ENCODE measurements at regions of chr3 and their contacts with region 1.

Region 1: GRCh38 chr3:105729667-105730066 is 139.1 kb downstream of the CBLB start:
- DNase-seq: no peak
- ATAC-seq: no peak
- H3K4me3 ChIP-seq: no peak overlapping the region
- H3K4me3 Mint-ChIP-seq: no peak overlapping the region
- H3K27ac ChIP-seq: no peak overlapping the region
- H3K27ac Mint-ChIP-seq: no peak overlapping the region
- H3K4me1 ChIP-seq: peaks cover 0 to 5% of the 10 kb centered on the region in 2 donors
- H3K4me1 Mint-ChIP-seq: peaks cover 17% of the 10 kb centered on the region
- H3K27me3 ChIP-seq: no peaks in the 10 kb centered on the region
- H3K27me3 Mint-ChIP-seq: no peaks in the 10 kb centered on the region
- CTCF ChIP-seq: no peak

Region 2: GRCh38 chr3:105715372-105715771 is 14.3 kb before region 1 on chr3:
- CTCF ChIA-PET with region 1: no interaction called
- POLR2A ChIA-PET with region 1: no interaction called
- intact Hi-C with region 1: no loop called
- DNase-seq: no peak
- ATAC-seq: no peak
- H3K4me3 ChIP-seq: no peak overlapping the region
- H3K4me3 Mint-ChIP-seq: no peak overlapping the region
- H3K27ac ChIP-seq: no peak overlapping the region
- H3K27ac Mint-ChIP-seq: no peak overlapping the region
- H3K4me1 ChIP-seq: no peaks in the 10 kb centered on the region
- H3K4me1 Mint-ChIP-seq: no peaks in the 10 kb centered on the region
- H3K27me3 ChIP-seq: no peaks in the 10 kb centered on the region
- H3K27me3 Mint-ChIP-seq: no peaks in the 10 kb centered on the region
- CTCF ChIP-seq: no peak

Region 3: DNA sequence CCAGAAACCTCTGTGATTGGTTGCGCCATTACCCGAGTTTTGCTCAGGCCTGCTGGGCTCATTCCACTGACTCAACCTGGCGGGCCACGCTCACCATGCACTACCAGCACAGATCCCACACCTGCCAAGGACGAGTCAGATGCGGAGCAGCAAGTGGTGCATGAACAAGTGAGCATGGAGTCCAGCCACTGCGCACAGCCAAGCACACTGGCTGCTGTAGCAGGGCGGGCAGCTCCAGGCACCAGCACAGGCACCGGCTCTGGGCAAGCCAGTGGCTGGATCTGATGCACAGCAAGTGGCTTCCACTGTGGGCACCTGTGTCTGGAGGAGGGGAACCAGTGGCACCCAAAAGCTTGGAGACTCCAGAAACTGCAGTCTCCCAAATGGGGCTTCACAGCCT is 28.8 kb after region 1 on chr3:
- CTCF ChIA-PET with region 1: no interaction called
- POLR2A ChIA-PET with region 1: no interaction called
- intact Hi-C with region 1: no loop called
- DNase-seq: no peak
- ATAC-seq: no peak
- H3K4me3 ChIP-seq: no peak overlapping the region
- H3K4me3 Mint-ChIP-seq: no peak overlapping the region
- H3K27ac ChIP-seq: no peak overlapping the region
- H3K27ac Mint-ChIP-seq: no peak overlapping the region
- H3K4me1 ChIP-seq: peaks cover 14 to 18% of the 10 kb centered on the region in 2 donors
- H3K4me1 Mint-ChIP-seq: peaks cover 20% of the 10 kb centered on the region
- H3K27me3 ChIP-seq: no peaks in the 10 kb centered on the region
- H3K27me3 Mint-ChIP-seq: no peaks in the 10 kb centered on the region
- CTCF ChIP-seq: no peak

Region 4: GRCh38 chr3:105774444-105775180 is 44.9 kb after region 1 on chr3:
- CTCF ChIA-PET with region 1: no interaction called
- POLR2A ChIA-PET with region 1: no interaction called
- intact Hi-C with region 1: loop called (anchors 5 kb)
- DNase-seq: no peak
- ATAC-seq: no peak
- H3K4me3 ChIP-seq: no peak overlapping the region
- H3K4me3 Mint-ChIP-seq: no peak overlapping the region
- H3K27ac ChIP-seq: peak overlapping the region in 1 of 2 donors; percentile 50
- H3K27ac Mint-ChIP-seq: no peak overlapping the region
- H3K4me1 ChIP-seq: peaks cover 8 to 18% of the 10 kb centered on the region in 2 donors
- H3K4me1 Mint-ChIP-seq: peaks cover 54% of the 10 kb centered on the region
- H3K27me3 ChIP-seq: no peaks in the 10 kb centered on the region
- H3K27me3 Mint-ChIP-seq: no peaks in the 10 kb centered on the region
- CTCF ChIP-seq: no peak

Measured in B cell (primary cell).